Common myeloid progenitor, CD34-positive (primary cell): ENCODE measurements at regions of chr15 and their contacts with region 1.

Region 1: GRCh38 chr15:70474471-70475396 is 288.6 kb downstream of the UACA start:
- DNase-seq: peak; percentile 96 to 99 (median 98)
- H3K4me3 ChIP-seq: peak overlapping the region in 5 of 7 experiments; percentile 37 to 67 (median 58)
- H3K27ac ChIP-seq: peak overlapping the region; percentile 56 to 65
- H3K4me1 ChIP-seq: peaks cover 11 to 76% (median 67%) of the 10 kb centered on the region in 4 experiments
- H3K27me3 ChIP-seq: no peaks in the 10 kb centered on the region

Region 2: DNA sequence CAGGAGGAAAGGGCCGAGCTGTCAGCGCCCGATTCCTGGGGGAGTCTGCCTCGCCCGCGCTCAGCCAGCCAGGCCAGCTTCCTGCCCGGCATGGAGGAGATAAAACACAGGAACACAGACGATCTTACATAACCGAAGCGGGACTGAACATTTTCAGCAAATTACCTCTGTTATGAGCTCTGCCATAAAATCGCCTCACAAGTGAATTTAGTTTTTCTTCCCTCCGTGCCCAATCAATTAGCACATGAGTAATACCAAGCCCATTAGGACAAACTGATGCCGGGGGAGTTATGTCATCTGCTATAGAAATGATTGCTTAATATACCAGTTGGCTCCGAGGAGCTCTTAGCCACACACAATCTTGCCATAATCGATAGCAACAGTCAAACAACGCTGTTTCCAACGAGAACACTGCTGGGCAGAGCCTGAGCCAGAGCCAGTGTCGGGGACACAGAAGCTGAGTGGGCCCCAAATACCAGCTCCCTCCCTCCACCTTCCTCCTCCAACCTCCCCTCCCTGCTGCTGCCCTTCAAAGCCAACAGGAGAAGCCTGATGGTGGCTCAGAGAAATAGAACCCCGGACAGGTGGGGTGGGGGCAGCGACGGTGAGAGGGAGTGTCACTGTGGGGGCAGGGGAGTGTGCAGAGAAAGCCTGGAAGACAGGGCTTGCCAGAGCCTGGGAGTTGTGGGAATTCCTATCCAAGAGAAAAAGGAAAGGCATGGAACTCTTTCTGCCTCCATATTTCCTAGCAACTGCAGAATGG is 97.6 kb before region 1 on chr15:
- CTCF ChIA-PET with region 1: no interaction called
- POLR2A ChIA-PET with region 1: no interaction called
- DNase-seq: peak in 2 of 3 donors; percentile 61 to 63
- H3K4me3 ChIP-seq: peak overlapping the region in 3 of 7 experiments; percentile 17 to 54 (median 43)
- H3K27ac ChIP-seq: no peak overlapping the region
- H3K4me1 ChIP-seq: peaks cover 0 to 31% (median 22%) of the 10 kb centered on the region in 4 experiments
- H3K27me3 ChIP-seq: no peaks in the 10 kb centered on the region

Region 3: DNA sequence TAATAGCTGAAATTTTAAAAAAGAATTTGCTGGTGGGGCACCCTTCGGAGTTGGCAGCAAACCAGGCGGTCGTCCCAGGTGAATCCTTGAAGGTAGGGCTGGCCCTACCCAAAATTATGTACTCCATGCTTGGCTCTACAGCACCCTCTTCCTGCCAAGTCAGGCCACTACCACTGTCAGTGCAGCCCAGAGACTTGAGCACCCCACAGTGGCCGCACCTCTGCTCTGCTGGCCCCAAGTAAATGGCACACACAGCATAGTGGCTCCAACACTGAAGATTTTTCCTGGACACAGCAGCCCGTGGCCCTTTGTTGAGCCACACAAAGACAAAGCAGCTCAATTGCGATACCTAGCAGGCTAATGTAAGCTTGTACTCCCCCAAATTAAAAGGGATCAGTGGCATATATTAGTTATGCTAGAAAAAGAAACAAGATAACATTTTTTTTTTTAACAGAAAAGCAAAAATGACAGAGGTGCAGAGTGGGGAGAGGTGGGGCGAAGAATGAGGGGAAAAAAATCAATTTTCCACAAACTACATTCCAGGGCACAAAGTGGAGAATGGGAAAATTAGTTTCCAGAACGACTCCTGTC is 38.1 kb after region 1 on chr15:
- CTCF ChIA-PET with region 1: interaction called, 281 read pairs
- POLR2A ChIA-PET with region 1: no interaction called
- DNase-seq: peak; percentile 81 to 86 (median 83)
- H3K4me3 ChIP-seq: no peak overlapping the region
- H3K27ac ChIP-seq: no peak overlapping the region
- H3K4me1 ChIP-seq: peaks cover 7 to 59% (median 38%) of the 10 kb centered on the region in 4 experiments
- H3K27me3 ChIP-seq: no peaks in the 10 kb centered on the region